ENCODE measurements at regions of chr1 and their contacts with region 1.

Region 1: GRCh38 chr1:65067491-65068201 is 80.4 kb upstream of the AK4 start:
- DNase-seq: peak; percentile 79 to 85
- ATAC-seq: peak; percentile 78
- H3K4me3 ChIP-seq: peak overlapping the region; percentile 78 to 100
- H3K27ac ChIP-seq: peak overlapping the region; percentile 100
- H3K4me1 ChIP-seq: peaks cover 0 to 3% of the 10 kb centered on the region in 2 donors
- H3K27me3 ChIP-seq: no peaks in the 10 kb centered on the region

Region 2: DNA sequence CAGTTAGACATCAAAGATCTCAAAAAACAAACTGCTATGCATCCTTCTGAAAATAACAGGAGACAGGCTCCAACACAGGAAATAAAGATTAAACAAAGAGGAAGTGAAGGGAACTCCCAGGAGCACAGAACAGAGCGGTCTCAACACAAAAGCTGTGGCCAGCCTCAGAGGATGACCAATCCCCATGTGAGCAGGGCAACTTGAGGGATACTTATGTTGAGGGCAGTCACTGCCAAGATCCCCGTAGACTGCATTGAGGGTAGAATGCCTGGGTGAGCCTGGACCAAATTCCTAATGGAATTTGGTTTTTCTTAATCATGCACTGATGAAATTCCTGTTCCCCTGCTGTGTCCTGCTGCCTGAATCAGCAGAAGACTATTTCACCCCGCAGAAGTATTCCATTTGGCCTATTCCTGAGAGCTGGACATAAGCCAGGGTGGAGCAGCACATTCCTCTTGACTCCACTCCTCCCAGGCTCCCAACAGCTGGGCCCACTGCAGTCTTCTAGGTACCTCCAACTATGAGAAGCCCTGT is 150.3 kb before region 1 on chr1:
- intact Hi-C with region 1: no loop called
- DNase-seq: peak in 1 of 2 donors; percentile 79
- ATAC-seq: peak; percentile 70
- H3K4me3 ChIP-seq: no peak overlapping the region
- H3K27ac ChIP-seq: no peak overlapping the region
- H3K4me1 ChIP-seq: peaks cover 5% of the 10 kb centered on the region in 2 donors
- H3K27me3 ChIP-seq: no peaks in the 10 kb centered on the region

Region 3: GRCh38 chr1:65002508-65003315 is 64.9 kb before region 1 on chr1:
- intact Hi-C with region 1: loop called in 1 of 2 experiments (anchors 5 kb)
- DNase-seq: peak; percentile 94 to 97
- ATAC-seq: peak; percentile 94
- H3K4me3 ChIP-seq: peak overlapping the region; percentile 63 to 68
- H3K27ac ChIP-seq: peak overlapping the region; percentile 97 to 98
- H3K4me1 ChIP-seq: peaks cover 0 to 2% of the 10 kb centered on the region in 2 donors
- H3K27me3 ChIP-seq: no peaks in the 10 kb centered on the region

Region 4: GRCh38 chr1:65105596-65105995 is 38.0 kb after region 1 on chr1:
- intact Hi-C with region 1: no loop called
- DNase-seq: no peak
- ATAC-seq: no peak
- H3K4me3 ChIP-seq: no peak overlapping the region
- H3K27ac ChIP-seq: no peak overlapping the region
- H3K4me1 ChIP-seq: no peaks in the 10 kb centered on the region
- H3K27me3 ChIP-seq: no peaks in the 10 kb centered on the region

Region 5: GRCh38 chr1:65148548-65149350 is 81.1 kb after region 1 on chr1:
- intact Hi-C with region 1: loop called in 1 of 2 experiments (anchors 2 kb)
- DNase-seq: peak; percentile 79 to 85
- ATAC-seq: peak; percentile 88
- H3K4me3 ChIP-seq: peak overlapping the region; percentile 58 to 65
- H3K27ac ChIP-seq: peak overlapping the region; percentile 15 to 54
- H3K4me1 ChIP-seq: no peaks in the 10 kb centered on the region
- H3K27me3 ChIP-seq: no peaks in the 10 kb centered on the region

Region 6: DNA sequence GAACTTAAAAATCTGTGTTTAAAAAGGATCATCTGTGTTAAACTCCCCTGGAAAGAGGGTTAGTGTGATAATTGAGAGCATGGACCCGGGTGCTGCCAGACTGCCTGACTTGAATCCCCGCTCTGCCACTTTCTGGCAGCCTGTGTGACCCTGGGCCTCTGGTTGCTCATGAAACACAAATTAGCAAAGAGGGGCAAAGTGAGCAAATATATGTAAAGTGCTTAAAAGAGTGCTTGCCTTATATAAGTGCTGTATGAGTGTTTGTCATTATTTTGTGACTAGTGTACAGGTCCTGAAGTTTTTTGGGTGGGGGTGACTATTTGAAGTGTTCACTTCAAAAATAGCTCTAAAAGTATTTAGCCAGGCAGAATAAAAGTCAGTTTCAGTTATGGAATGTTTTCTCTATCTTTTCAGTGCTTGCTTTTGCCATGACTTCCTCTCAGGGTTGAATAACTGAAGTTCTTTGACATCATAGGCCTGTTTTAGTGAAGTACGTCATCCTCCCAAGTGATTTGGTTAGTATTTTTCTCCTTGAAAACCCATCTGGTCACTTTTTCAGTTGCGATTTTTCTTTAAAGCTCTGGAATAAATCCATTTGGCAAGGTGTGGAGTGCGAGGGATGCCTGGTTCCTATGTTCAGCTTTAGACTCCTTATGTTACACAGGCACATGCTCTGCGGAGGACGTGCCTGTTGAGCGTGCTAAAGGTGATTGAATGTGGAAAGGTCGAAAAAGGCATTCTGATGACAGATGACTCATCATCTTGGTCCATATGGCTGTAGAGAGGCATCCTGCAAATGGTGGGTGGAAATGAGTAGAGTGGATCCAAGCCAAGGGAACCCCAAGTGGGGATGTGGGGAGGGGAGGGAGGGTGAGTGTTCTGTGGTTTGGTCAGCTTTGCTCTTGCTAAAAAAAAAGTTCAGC is 128.1 kb after region 1 on chr1:
- intact Hi-C with region 1: loop called in 1 of 2 experiments (anchors 5 kb)
- DNase-seq: no peak
- ATAC-seq: peak; percentile 69
- H3K4me3 ChIP-seq: no peak overlapping the region
- H3K27ac ChIP-seq: peak overlapping the region; percentile 86 to 87
- H3K4me1 ChIP-seq: peaks cover 4 to 6% of the 10 kb centered on the region in 2 donors
- H3K27me3 ChIP-seq: no peaks in the 10 kb centered on the region

Region 7: DNA sequence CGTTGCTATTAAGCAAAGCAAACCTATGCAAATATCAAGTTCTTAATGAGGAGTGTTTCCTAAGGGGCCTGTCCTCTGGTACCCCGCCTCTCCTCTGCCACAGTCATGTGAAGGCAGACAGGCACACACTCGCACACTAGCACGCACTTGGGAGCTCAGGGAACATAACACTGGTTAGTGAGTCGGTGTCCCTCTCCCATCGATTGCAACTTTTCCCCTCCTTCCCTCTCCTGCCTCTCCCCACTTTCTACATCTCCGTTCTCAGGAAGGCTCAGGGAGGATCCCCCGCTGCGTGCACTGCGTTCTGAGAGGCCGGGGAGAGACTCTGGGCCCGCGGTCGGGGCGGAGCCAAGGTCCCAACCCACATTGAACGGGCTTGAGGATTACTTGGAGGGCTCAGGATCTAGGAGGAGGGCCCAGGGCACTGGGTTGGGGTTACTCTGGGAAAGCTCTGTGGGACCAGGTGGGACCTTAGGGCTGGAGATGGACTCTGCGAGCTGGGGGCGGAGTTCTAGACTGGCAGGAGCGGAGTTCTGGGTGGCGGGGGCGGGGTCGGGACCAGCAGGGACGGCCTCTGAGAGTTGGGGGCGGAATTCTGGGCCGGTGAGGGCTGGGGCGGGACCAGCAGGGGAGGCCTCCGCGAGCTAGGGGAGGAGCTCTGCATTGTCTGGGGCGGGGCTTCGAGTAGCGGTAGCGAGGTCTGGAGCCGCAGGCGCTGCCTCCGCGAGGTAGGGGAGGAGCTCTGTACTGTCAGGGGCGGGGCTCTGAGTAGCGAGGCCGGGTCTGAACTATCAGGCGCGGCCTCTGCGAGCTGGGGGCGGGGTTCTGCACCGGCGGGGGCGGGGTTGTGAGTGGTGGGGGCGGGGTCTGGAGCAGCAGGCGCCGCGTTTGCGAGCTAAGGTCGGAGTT is 352.3 kb after region 1 on chr1:
- intact Hi-C with region 1: loop called in 1 of 2 experiments (anchors 2 kb)
- DNase-seq: peak; percentile 99
- ATAC-seq: peak; percentile 98
- H3K4me3 ChIP-seq: peak overlapping the region; percentile 20 to 98
- H3K27ac ChIP-seq: peak overlapping the region in 1 of 2 donors; percentile 21
- H3K4me1 ChIP-seq: peaks cover 0 to 3% of the 10 kb centered on the region in 2 donors
- H3K27me3 ChIP-seq: no peaks in the 10 kb centered on the region

Region 8: DNA sequence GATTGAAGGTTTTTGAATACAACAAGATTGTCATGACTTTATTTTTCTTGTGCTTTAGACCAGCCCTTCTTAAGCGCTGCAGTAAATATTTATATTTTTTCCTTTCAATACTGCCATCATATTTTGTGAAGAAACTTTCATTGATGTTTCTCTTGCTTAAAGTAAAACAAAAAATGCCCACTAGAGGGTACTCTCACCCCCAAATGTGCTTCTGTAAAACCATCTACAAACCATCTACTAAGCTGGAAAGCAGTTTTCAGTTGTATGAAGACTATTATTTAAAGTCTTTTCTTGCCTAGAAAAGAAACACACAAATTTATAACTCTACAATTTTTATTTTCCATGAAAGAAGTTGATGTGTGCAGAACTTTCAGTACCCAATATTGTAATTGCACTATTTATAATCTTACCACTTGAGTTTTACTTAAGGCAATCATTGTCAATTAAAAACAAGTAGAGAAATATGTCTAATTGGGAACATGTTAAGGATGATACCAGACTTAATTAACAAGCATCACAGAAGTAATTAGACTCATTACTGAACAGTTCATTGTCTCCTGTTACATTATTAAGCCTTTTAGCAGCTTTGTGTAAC is 363.6 kb after region 1 on chr1:
- intact Hi-C with region 1: loop called in 1 of 2 experiments (anchors 10 kb)
- DNase-seq: no peak
- ATAC-seq: no peak
- H3K4me3 ChIP-seq: no peak overlapping the region
- H3K27ac ChIP-seq: no peak overlapping the region
- H3K4me1 ChIP-seq: peaks cover 0 to 1% of the 10 kb centered on the region in 2 donors
- H3K27me3 ChIP-seq: no peaks in the 10 kb centered on the region

Region 9: DNA sequence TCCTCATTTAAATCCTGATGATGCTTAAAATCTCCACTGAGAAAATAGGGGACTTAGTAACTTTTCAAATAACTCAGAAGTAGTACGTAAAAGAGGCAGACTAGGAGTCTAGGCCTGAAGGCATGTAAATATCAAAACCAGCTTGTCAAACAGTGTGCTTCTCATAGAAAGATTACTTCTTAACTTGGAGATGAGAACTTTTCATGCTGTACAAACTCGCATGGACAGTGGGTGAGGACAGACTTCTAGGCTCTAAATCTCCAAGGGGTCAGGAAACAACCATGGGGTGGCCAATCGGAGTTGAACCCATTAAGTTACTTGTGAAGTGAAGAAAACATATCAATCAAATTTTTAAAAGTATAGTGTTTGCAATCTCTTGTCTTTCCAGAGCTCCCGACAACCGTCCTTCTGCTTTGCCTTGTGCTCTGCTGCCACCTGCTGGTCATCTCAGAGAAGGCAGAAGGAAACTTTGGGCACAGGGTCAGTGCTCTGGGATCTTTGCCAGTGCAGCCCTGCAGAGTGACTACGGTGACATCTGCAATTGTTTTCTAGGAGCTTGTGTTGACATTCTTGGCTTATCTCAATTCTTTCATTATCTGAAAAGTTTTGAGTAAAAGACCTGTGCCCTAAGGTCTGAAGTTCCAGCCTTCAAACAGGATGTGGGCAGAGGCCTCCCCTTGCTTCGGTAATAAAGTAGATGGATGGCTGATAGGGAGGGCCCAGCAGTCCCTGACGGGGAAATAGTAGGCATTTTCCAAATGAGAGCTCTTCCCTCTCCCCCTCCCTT is 620.0 kb after region 1 on chr1:
- intact Hi-C with region 1: loop called in 1 of 2 experiments (anchors 10 kb)
- DNase-seq: peak; percentile 88 to 92
- ATAC-seq: peak; percentile 93
- H3K4me3 ChIP-seq: no peak overlapping the region
- H3K27ac ChIP-seq: no peak overlapping the region
- H3K4me1 ChIP-seq: peaks cover 3 to 5% of the 10 kb centered on the region in 2 donors
- H3K27me3 ChIP-seq: no peaks in the 10 kb centered on the region

Measured in aorta (tissue), 5 donors.